ENCODE measurements at regions of chr17 and their contacts with region 1.

Region 1: GRCh38 chr17:74671031-74671771 is 41.5 kb downstream of the CD300LF start:
- DNase-seq: peak; percentile 71 to 80
- ATAC-seq: peak; percentile 88 to 98
- H3K4me3 ChIP-seq: no peak overlapping the region
- H3K27ac ChIP-seq: no peak overlapping the region
- H3K4me1 ChIP-seq: no peaks in the 10 kb centered on the region
- CTCF ChIP-seq: no peak
- EP300 ChIP-seq: no peak
- POLR2A ChIP-seq: no peak
- RAD21 ChIP-seq: no peak

Region 2: DNA sequence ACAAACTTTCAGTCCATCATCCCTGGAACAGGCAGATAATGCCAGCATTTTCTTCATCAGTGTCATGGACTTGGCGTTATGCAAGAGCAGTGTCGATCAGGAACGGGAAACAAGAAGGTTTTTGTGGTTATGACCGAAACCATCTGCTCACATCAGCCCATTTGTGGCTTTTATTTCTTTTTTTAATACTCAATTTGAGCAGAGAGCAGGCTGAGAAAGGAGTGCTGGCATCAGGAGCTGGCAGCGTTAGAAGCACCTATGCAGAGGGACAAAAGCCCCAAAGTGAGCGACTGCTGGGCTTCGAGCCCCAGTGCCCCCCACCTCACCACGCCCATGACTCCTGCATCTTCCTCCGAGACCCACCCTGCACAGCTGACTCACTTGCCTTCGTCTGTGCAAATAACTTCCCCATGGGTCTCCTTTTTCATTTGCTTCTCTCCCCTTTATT is 31.5 kb before region 1 on chr17:
- CTCF ChIA-PET with region 1: no interaction called
- POLR2A ChIA-PET with region 1: no interaction called
- DNase-seq: no peak
- ATAC-seq: no peak
- H3K4me3 ChIP-seq: no peak overlapping the region
- H3K27ac ChIP-seq: no peak overlapping the region
- H3K4me1 ChIP-seq: no peaks in the 10 kb centered on the region
- CTCF ChIP-seq: no peak
- EP300 ChIP-seq: no peak
- POLR2A ChIP-seq: no peak
- RAD21 ChIP-seq: no peak

Region 3: DNA sequence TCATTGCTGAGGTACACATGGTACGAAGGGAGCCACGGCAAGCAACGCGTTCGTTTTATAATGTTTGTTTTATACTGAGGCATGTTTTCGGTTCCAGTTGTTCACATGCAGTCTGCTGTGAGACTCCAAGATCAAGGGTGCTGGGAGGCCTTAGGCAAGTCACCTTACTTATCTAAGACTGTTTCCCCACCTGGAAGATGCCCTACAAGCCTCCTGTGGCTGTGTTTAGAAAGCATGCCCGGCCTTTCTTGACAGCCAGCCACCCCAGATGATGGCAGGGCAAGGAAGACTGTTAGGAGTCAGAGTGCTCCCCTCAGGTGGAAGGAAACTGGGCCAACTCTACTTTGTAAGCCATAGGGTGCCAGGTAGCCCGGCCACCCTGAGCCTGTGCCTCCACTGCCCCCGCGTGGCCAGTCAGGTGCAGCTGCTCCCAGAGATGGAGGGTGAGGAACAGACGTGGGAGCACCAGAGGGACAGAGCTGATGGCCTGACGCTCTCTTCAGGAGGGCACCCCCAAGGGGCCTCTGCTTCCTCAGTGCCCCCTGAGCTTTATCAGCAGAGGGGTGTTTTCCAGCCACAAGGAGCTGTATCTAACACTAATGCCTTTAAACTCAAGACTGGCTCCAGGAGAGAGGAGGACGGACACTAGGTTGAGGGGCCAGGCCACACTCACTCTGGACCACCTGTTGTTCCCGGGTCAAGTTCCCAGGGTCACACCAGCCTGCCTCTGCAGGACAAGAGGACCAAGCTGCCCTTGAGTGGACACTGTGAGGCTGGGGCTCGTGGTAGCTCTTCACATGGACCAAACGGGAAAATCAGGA is 99.5 kb after region 1 on chr17:
- CTCF ChIA-PET with region 1: interaction called, 10 read pairs
- POLR2A ChIA-PET with region 1: no interaction called
- DNase-seq: peak; percentile 77 to 88
- ATAC-seq: peak; percentile 79 to 89
- H3K4me3 ChIP-seq: no peak overlapping the region
- H3K27ac ChIP-seq: no peak overlapping the region
- H3K4me1 ChIP-seq: peaks cover 33% of the 10 kb centered on the region
- CTCF ChIP-seq: peak; percentile 86
- EP300 ChIP-seq: no peak
- POLR2A ChIP-seq: no peak
- RAD21 ChIP-seq: peak; percentile 87 to 92

Measured in A549 (cell line).